ENCODE measurements at regions of chr7 and their contacts with region 1.

Region 1: DNA sequence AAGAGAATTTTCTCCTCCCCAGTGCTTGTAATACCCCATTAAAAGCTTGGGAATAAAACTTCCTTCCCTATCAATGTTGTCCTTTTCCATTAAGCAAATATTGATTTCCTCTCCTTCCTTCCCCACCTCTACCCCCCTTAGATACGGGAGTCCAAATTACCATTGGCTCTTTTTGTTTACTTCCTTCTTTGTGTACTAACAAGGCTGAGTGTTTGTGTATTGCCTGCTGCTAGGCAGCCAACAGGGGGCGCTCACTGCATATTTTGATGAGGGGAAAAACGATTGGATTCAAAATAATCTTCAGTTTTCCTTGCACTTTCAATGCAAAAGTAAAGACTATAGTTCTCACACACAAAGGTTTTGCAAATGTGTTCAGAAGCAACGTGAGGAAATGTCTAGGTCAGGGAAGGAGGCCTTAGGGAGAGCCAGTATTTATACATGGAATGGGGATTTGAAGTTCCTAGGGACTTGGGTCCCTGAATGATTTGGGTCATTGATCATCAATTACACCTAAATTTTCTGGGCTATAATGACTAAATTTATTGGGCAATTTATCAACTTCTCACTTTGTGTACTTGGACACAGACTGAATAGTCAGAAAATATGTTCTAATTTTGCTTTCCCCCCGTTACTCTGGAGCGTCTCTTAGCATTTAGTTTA is 23.6 kb upstream of the VPS41 start:
- DNase-seq: peak; percentile 10
- H3K4me3 ChIP-seq: no peak overlapping the region
- H3K27ac ChIP-seq: no peak overlapping the region
- H3K27me3 ChIP-seq: peaks cover 3% of the 10 kb centered on the region
- CTCF ChIP-seq: peak; percentile 90

Region 2: DNA sequence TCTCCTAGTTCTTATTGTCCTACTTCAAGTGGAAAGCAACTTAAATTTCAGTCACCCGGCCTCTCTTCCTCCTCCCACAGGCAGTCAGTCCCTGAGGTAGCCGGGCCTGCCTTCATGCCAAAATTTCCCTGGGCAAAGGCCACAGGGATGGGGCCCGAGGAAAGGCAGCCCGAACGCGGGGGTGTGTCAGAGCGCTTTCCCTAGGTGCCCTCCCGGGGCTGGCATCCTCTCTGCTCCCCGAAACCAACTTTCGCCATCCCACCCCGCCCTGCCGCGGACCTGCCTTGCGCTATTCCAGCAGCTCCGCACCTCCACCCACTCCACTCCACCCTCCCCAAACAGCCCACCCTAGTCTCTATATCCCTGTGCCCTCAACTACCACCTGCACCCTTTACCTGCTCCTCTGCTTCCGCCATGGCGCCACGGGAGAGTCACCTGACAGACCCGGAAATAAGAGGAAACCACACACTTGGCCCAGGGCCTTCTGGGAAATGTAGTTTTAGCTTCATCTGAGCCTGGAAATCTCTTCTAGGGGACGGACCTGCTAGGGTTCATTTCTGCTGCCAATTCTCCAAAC is 23.8 kb before region 1 on chr7 and contains the start of gene VPS41:
- CTCF ChIA-PET with region 1: interaction called, 14 read pairs
- POLR2A ChIA-PET with region 1: no interaction called
- DNase-seq: peak; percentile 15
- H3K4me3 ChIP-seq: peak within 1 kb of the TSS; percentile 91
- H3K27ac ChIP-seq: no peak within 1 kb of the TSS
- H3K27me3 ChIP-seq: no peaks in the 10 kb centered on the region
- CTCF ChIP-seq: no peak
- polyA plus RNA-seq, gene VPS41: 41.6 and 67.1 TPM in 2 replicates

Region 3: DNA sequence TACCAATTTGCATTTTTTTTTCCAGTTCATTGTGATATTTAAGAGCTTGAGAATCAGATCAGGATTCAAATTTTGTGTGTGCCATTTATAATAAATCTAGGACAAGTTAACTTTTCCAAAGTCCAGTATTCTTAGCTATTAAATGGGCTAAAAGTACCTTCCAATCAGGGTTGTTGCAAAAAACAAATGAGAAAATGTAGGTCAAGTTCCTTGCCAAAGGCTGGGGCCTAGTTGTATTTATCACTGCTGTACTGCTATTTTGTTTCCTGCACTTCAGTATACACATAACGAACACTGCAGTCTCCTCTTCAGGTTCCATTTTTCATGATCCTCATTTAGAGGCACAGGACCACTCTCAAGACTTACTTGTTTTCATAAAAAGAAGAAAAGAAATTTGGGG is 16.2 kb before region 1 on chr7:
- CTCF ChIA-PET with region 1: interaction called, 11 read pairs
- POLR2A ChIA-PET with region 1: no interaction called
- DNase-seq: no peak
- H3K4me3 ChIP-seq: no peak overlapping the region
- H3K27ac ChIP-seq: no peak overlapping the region
- H3K27me3 ChIP-seq: no peaks in the 10 kb centered on the region
- CTCF ChIP-seq: no peak

Region 4: DNA sequence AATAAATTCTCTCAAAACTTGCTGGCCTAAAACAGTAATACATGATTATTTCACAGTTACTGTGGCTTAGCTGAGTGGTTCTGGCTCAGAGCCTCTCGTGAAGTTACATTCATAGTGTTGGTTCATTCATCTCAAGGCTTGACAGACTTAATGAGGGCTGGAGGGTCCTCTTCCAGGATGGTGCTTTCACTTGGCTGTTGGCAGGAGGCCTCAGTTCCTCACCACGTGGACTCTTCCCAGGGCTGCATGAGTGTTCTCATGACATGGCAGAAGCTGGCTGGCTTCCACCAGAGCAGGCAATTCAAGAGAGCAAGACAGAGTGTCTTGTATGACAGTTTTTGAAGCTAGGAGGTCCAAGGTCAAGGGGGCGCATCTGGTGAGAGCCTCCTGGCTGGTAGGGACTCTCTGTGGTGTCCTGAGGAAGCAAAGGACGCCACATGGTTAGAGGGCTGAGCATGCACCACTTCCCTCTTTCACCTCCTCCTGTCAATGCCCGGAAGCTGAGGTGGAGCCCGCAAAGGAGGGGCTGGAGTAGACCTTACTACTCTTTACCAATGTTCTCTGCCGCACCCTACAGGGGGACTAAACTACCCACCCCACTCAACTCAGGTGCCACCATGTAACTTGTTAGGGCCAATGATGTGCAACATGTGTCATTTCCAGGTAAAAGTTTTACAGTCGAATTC is 575.4 kb after region 1 on chr7:
- CTCF ChIA-PET with region 1: no interaction called
- POLR2A ChIA-PET with region 1: no interaction called
- DNase-seq: no peak
- H3K4me3 ChIP-seq: no peak overlapping the region
- H3K27ac ChIP-seq: no peak overlapping the region
- H3K27me3 ChIP-seq: no peaks in the 10 kb centered on the region
- CTCF ChIP-seq: no peak

Measured in AG04450 (cell line).